HCT116 (cell line): ENCODE measurements at regions of chr2 and their contacts with region 1.

Region 1: DNA sequence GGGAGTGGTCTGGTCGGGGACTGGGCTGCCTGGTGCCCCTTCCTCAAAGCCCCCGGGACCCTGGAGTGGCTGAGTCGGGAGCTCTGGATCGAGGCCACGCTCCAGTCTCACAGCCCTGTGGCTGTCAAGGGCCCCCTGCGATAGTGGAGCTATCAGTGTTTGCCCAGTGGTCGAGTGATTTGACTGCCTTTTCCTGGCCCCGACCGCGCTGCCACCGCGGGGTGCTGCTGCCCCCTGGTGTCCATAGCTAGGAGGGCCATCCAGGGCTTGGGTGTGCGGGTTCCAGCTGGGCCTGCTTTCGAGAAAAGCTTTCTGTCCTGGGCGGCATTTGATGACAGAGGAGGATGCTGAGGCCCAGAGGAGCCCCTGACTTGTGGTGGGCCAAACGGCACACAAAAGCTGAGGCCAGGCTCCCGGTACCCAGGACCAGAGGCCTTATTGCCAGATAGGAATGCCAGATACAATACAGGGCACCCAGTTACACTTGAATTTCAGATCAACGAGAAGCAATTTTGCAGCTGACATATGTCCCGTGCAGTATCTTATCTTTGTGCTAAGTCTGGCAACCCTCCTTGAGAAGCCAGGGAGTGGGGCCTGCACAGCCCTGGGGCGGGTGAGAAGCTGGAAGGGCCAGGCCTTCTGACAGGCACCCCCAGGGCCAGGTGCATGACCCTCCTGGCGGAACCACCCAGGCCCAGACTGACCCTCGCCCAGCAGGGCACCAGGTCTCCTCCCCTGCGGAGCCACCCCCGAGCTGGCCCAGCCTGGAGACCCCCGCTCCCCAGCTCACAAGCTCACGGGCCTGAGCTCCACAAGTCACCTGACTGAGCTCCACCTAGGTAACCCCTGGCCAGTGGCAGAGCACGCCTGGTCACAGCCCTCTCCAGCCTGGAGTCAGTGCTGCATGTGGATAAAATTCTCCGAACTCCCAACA is 13.0 kb downstream of the ODC1 start:
- DNase-seq: peak; percentile 43
- ATAC-seq: peak; percentile 72
- H3K4me3 ChIP-seq: no peak overlapping the region
- H3K27ac ChIP-seq: no peak overlapping the region
- H3K4me1 ChIP-seq: peaks cover 4 to 34% of the 10 kb centered on the region in 2 experiments; a peak in 3 of 4 replicates
- H3K27me3 ChIP-seq: no peaks in the 10 kb centered on the region
- CTCF ChIP-seq: peak; percentile 92 to 96 (median 95)
- POLR2A ChIP-seq: no peak
- RAD21 ChIP-seq: peak; percentile 100

Region 2: DNA sequence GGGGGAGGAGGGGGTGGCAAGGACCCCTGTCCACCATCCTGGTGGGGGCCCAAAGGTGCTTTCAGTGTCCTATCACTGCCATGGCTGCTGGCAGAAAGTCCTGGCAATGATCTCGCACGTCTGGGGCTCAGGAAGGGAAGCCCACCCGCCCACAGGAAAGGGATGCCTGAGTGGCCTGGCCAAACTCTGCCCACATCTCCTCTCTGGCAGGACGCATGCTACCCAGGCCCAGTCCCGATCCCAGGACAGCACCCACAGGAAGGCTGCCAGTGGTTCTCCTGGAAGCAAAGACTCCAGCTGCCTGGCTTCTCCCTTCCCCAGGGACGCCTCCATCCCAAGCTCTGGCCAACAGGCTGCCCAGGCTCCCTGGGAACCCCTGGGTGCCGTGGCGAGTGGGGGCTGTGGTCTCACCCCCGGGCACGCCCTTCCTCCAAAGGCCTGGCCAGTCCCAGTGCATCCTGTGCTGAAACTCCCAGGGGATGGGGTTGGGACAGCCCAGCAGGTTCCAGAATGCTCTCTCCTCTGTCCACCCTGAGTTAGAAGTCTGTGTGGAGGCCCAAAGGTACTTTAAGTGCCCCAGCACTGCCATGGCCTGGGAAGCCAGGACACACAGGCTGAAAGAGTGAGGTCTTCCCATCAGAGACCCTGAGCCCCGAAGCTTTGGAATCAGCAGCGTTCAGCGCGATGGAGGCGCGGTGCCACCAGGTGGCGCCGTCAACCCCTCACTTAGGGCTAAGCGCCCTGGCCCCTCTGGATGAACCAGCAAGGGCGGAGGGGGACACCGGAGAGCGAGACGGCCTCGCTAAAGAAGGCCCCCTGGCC is 621.6 kb before region 1 on chr2:
- CTCF ChIA-PET with region 1: interaction called, 10 read pairs
- POLR2A ChIA-PET with region 1: no interaction called
- RAD21 ChIA-PET with region 1: no interaction called
- intact Hi-C with region 1: loop called (anchors 10 kb)
- DNase-seq: no peak
- ATAC-seq: peak; percentile 97
- H3K4me3 ChIP-seq: peak overlapping the region; percentile 11 to 16
- H3K27ac ChIP-seq: no peak overlapping the region
- H3K4me1 ChIP-seq: peaks cover 7 to 19% of the 10 kb centered on the region in 2 experiments; a peak in 3 of 4 replicates
- H3K27me3 ChIP-seq: no peaks in the 10 kb centered on the region
- CTCF ChIP-seq: peak; percentile 89 to 94 (median 93)
- POLR2A ChIP-seq: no peak
- RAD21 ChIP-seq: peak; percentile 98

Region 3: DNA sequence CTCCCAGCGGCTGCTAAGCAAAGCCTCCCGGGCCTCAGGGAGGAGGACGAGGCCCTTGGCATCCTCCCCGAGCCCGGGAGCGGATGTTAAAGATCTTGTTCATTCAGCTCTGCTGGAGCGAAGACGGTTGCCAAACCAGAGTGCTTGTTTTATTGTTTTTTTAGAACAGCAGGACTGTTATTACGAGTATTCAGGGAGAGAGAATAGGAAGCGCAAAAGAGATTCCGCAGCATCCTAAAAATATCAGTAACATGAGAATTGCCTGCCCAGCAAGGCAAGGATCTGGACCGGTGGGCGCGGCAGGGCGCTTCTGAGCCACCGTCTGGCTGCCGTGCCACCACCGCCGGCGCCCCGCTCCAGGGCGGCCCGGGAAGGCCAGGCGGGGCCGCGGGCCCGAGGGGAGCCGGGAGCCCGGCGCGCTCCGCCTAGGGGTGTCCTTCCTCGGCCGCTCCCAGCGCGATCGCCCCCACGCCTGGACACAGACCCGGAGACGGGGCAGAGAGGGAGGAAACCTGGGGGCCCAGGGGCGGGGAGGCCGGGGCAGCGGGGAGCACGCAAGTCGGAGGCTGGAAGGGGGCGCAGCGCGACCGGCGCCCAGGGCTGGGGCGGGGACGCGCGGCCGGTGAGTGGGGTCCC is 355.8 kb before region 1 on chr2:
- CTCF ChIA-PET with region 1: interaction called, 69 read pairs
- POLR2A ChIA-PET with region 1: no interaction called
- RAD21 ChIA-PET with region 1: interaction called in 1 of 2 experiments, 3 read pairs
- intact Hi-C with region 1: no loop called
- DNase-seq: no peak
- ATAC-seq: peak; percentile 69
- H3K4me3 ChIP-seq: peak overlapping the region; percentile 45 to 60
- H3K27ac ChIP-seq: peak overlapping the region; percentile 46; the same call in 1 of the 2 replicates
- H3K4me1 ChIP-seq: peaks cover 6 to 13% of the 10 kb centered on the region in 2 experiments
- H3K27me3 ChIP-seq: 0 out of 2 replicates have a peak, but pooled peaks cover under 1% of the 10 kb centered on the region
- CTCF ChIP-seq: no peak
- POLR2A ChIP-seq: no peak
- RAD21 ChIP-seq: no peak

Region 4: DNA sequence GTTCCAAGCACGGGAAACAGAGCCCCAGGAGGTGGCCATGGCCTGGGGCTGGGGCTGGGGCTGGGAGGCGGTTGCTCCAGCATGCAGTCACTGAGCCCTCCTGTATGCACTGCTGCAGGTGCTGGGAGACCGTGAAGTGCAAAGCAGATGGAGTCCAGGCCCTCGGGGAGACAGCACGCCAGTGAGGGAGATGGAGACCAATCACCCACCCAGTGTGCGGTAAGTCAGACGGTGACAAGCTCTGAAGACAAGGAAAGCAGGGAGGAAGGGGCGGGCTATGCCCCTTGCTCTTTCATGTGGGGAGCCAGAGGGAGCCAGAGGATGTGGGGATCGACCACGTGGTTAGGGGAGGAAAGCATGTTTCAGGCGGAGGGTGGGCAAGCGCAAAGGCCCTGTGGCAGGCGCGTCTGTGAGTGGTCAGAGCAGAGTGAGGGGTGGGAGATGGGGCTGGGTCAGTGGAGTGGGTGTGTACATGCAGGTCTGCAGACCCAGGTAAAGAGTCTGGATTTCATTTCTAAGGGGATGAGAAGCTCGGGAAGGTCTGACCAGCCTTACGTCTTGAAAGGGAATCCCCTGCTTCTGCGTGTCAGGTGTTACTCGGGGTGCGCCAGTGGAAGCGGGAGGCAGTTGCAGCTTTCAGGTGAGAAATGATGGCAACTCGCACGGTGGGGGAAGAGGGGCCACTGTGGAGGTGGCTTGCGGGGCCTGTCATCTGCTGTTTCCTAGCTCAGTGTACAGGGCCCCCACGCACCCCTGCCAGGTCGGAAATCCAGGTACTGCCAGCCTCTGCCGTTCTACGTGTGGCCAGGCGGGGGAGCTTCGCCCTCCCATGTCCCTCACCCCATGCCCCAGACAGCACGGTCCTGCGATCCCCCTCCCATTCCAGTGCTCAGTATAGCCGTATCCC is 293.2 kb before region 1 on chr2:
- CTCF ChIA-PET with region 1: interaction called, 19 read pairs
- POLR2A ChIA-PET with region 1: interaction called, 4 read pairs
- RAD21 ChIA-PET with region 1: interaction called, 4 to 7 read pairs
- intact Hi-C with region 1: loop called (anchors 5 kb)
- DNase-seq: no peak
- ATAC-seq: peak; percentile 81
- H3K4me3 ChIP-seq: no peak overlapping the region
- H3K27ac ChIP-seq: no peak overlapping the region
- H3K4me1 ChIP-seq: peaks cover 2 to 17% of the 10 kb centered on the region in 2 experiments; a peak in 3 of 4 replicates
- H3K27me3 ChIP-seq: no peaks in the 10 kb centered on the region
- CTCF ChIP-seq: peak; percentile 49 to 62 (median 60); a peak in 5 of 6 replicates
- POLR2A ChIP-seq: no peak
- RAD21 ChIP-seq: peak; percentile 78

Region 5: DNA sequence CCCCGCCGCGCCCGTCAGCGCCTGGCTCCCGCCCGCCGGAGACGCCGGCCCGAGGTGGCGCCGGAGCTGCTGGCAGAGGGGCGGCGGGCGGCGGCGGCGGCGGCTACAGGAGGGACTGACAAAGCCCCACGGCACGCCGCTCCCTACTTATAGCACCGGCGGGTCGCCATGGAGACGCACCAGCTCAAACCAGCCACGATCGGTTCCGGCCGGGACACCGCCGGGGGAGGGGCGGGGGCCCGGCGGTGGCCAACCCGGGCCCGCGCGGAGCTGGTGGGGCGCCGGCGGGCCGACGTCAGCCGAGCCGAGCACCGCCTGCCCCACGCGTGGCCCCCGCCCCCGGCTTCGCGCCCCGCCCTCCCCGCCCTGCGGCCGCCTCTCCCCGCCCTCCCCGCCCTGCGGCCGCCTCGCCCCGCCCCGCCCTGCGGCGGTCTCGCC is 13.1 kb after region 1 on chr2 and contains the start of gene ODC1:
- CTCF ChIA-PET with region 1: interaction called, 12 read pairs
- POLR2A ChIA-PET with region 1: interaction called, 9 read pairs
- RAD21 ChIA-PET with region 1: no interaction called
- intact Hi-C with region 1: no loop called
- DNase-seq: peak; percentile 82
- ATAC-seq: peak; percentile 90
- H3K4me3 ChIP-seq: peak within 1 kb of the TSS; percentile 81 to 91
- H3K27ac ChIP-seq: peak within 1 kb of the TSS; percentile 96
- H3K4me1 ChIP-seq: peaks cover 14 to 45% of the 10 kb centered on the region in 2 experiments; a peak in 3 of 4 replicates
- H3K27me3 ChIP-seq: no peaks in the 10 kb centered on the region
- CTCF ChIP-seq: no peak
- POLR2A ChIP-seq: peak; percentile 67
- RAD21 ChIP-seq: no peak
- total RNA-seq, gene ODC1: 231 TPM